ENCODE measurements at regions of chr4 and their contacts with region 1.

Region 1: DNA sequence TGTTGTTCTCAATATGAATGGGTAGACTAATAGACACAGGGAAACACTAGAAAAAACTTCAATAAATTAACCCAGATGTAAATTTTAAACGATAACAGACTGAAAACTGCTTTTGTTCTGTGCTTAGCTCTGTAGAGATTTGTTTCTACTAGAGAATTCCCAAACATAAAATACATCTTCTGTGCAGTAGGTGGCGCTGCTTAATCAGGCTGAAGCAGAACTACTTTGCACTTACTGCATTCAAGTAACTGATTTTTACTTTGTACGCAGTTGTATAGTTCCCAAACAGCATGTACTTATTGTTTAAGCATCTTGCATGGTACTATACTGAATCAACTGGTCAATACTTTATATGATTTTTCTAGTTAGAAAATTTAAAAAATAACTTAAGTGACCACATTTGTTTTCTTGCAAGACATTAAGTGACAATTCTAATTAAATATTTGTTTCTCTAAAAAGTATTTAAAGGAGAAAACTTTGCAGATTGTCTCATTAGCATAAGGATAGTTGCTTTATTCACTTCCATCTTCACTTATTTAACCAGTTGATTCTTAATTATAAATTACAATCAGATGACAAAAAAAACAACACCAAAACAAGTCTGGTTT is 490.6 kb downstream of the IL15 start:
- DNase-seq: peak; percentile 30
- ATAC-seq: peak; percentile 73

Region 2: DNA sequence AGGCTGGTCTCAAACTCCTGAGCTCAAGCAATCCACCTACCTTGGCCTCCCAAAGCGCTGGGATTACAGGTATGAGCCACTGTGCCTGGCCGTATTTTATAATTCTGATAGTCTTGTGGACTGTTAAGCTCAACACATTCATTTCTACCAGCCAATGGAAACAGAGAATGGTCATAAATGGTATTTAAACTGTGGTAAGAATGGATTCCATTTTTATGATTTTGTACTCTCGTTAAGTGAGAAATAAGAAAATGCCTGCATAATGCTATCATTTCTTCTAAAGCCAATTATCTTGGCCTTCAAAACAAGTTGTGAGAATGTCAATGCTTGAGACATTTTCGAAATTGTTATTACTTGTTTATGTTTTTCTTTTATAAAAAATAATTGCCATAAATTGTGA is 169.6 kb before region 1 on chr4:
- intact Hi-C with region 1: no loop called
- DNase-seq: no peak
- ATAC-seq: no peak

Region 3: GRCh38 chr4:142238589-142238988 is 111.6 kb after region 1 on chr4:
- intact Hi-C with region 1: no loop called
- DNase-seq: no peak
- ATAC-seq: no peak

Region 4: DNA sequence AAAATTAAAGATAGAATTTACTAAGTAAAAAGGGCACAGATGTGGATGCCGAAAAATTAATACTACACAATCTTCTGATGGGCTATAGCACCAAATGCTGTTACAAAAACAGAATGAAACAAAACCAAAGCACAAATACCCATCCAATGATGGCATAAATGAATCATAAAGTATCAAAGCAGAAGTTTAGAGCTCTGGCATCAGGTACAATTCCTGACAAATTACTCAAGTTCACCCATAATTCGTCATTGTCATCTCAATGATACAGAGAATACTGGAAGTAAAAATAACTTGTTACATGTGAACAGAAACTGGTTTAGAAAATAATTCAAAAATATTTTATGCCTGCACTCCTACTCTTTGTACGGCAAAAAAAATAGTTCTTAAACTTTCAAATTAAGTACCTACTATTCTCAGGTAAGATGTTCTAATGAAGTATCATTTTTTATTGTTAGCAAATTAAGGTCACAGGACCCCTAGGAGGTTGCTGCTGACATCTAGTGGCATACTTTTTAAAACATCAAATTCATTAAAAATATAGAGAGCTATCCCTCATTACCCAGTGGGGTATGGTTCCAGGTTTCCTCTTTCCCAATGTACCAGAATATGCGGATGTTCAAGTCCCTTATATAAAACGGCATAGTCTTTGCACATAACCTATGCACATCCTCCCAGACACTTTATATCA is 593.0 kb after region 1 on chr4:
- intact Hi-C with region 1: loop called (anchors 10 kb)
- DNase-seq: no peak
- ATAC-seq: no peak

Region 5: GRCh38 chr4:142846729-142847596 is 720.0 kb after region 1 on chr4:
- intact Hi-C with region 1: loop called (anchors 5 kb)
- DNase-seq: peak; percentile 45
- ATAC-seq: peak; percentile 82

Measured in Right ventricle myocardium superior (tissue), 1 donor.